Endothelial cell of umbilical vein (primary cell): ENCODE measurements at regions of chr2 and their contacts with region 1.

Region 1: GRCh38 chr2:23312996-23313606 is 71.9 kb upstream of the KLHL29 start:
- DNase-seq: peak; percentile 55
- H3K4me3 ChIP-seq: no peak overlapping the region
- H3K27ac ChIP-seq: no peak overlapping the region
- H3K4me1 ChIP-seq: no peaks in the 10 kb centered on the region
- H3K27me3 ChIP-seq: no peaks in the 10 kb centered on the region
- CTCF ChIP-seq: peak; percentile 87 to 92
- POLR2A ChIP-seq: no peak

Region 2: GRCh38 chr2:23351388-23352141 is 38.5 kb after region 1 on chr2:
- CTCF ChIA-PET with region 1: interaction called, 3 read pairs
- POLR2A ChIA-PET with region 1: no interaction called
- dilution Hi-C with region 1: no loop called
- intact Hi-C with region 1: loop called (anchors 1 kb)
- DNase-seq: peak; percentile 74
- H3K4me3 ChIP-seq: no peak overlapping the region
- H3K27ac ChIP-seq: no peak overlapping the region
- H3K4me1 ChIP-seq: peaks cover 2% of the 10 kb centered on the region
- H3K27me3 ChIP-seq: no peaks in the 10 kb centered on the region
- CTCF ChIP-seq: peak; percentile 88 to 96
- POLR2A ChIP-seq: no peak

Region 3: GRCh38 chr2:23460228-23460627 is 147.1 kb after region 1 on chr2:
- CTCF ChIA-PET with region 1: no interaction called
- POLR2A ChIA-PET with region 1: no interaction called
- dilution Hi-C with region 1: no loop called
- intact Hi-C with region 1: loop called (anchors 10 kb)
- DNase-seq: peak; percentile 18
- H3K4me3 ChIP-seq: no peak overlapping the region
- H3K27ac ChIP-seq: no peak overlapping the region
- H3K4me1 ChIP-seq: no peaks in the 10 kb centered on the region
- H3K27me3 ChIP-seq: no peaks in the 10 kb centered on the region
- CTCF ChIP-seq: peak; percentile 36 to 53
- POLR2A ChIP-seq: no peak

Region 4: GRCh38 chr2:23566236-23567142 is 253.4 kb after region 1 on chr2:
- CTCF ChIA-PET with region 1: interaction called, 5 read pairs
- POLR2A ChIA-PET with region 1: no interaction called
- dilution Hi-C with region 1: no loop called
- intact Hi-C with region 1: loop called (anchors 1 kb)
- DNase-seq: peak; percentile 30
- H3K4me3 ChIP-seq: no peak overlapping the region
- H3K27ac ChIP-seq: no peak overlapping the region
- H3K4me1 ChIP-seq: no peaks in the 10 kb centered on the region
- H3K27me3 ChIP-seq: no peaks in the 10 kb centered on the region
- CTCF ChIP-seq: peak; percentile 51 to 55
- POLR2A ChIP-seq: no peak

Region 5: GRCh38 chr2:23636426-23636825 is 323.3 kb after region 1 on chr2:
- CTCF ChIA-PET with region 1: no interaction called
- POLR2A ChIA-PET with region 1: no interaction called
- dilution Hi-C with region 1: no loop called
- intact Hi-C with region 1: loop called (anchors 1 kb)
- DNase-seq: peak; percentile 24
- H3K4me3 ChIP-seq: no peak overlapping the region
- H3K27ac ChIP-seq: no peak overlapping the region
- H3K4me1 ChIP-seq: peaks cover 8% of the 10 kb centered on the region
- H3K27me3 ChIP-seq: no peaks in the 10 kb centered on the region
- CTCF ChIP-seq: peak in 1 of 2 donors; percentile 20
- POLR2A ChIP-seq: no peak